ENCODE measurements at regions of chr19 and their contacts with region 1.

Region 1: DNA sequence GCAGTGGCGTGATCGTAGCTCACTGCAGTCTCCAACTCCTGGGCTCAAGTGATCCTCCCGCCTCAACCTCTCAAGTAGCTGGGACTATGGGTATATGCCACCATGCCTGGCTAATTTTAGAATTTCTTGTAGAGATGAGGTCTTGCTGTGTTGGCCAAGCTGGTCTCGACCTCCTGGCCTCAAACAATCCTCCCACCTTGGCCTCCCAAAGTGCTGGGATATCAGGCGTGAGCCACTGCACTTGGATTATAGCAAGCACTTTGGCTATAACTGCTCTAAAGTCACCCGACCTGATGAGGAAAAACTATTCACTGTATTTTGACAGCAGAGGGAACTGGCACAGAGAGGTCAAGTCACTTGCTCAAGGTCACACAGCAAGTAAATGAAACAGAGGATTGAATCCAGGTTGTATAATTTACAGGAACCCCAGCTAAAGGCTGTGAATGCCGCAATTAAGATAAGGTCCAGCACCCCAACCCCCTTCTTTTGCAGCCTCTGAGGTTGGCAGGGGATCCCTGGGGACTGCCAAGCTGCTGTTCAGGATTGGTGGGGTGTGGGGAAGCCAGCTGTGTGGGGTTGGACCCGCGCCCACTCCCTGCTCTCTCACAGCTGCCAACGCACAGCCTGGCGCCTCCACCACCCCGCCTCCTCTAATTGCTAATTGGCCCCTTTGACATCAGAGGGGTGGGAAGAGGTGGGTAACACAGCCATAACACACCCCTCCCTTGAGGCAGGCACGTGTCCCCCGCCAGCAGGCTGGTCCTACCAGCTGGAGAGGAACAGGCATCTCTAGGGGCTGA is 6.0 kb downstream of the TMIGD2 start:
- DNase-seq: no peak
- H3K4me3 ChIP-seq: no peak overlapping the region
- H3K27ac ChIP-seq: no peak overlapping the region
- H3K4me1 ChIP-seq: no peaks in the 10 kb centered on the region
- H3K27me3 ChIP-seq: no peaks in the 10 kb centered on the region
- CTCF ChIP-seq: no peak

Region 2: GRCh38 chr19:4032436-4032835 is 263.7 kb before region 1 on chr19:
- CTCF ChIA-PET with region 1: no interaction called
- POLR2A ChIA-PET with region 1: no interaction called
- intact Hi-C with region 1: no loop called
- DNase-seq: no peak
- H3K4me3 ChIP-seq: no peak overlapping the region
- H3K27ac ChIP-seq: no peak overlapping the region
- H3K4me1 ChIP-seq: no peaks in the 10 kb centered on the region
- H3K27me3 ChIP-seq: no peaks in the 10 kb centered on the region
- CTCF ChIP-seq: no peak

Region 3: DNA sequence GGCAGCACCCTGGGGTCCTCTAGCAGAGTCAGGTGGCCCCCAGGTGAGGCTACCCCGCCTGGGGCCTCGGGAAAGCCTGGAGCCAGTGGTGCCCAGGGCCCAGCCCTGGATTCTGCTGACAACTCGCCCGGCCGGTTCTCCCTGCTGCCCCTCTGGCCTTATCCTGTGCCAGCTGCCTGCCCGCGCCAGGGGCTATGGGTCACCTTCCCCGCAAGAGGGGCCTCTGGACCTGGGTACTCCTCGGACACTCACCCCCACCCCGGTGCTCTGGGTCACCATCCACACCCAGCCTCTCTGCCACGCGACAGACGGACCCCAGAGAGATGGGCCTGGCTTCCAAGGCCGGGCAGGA is 253.5 kb before region 1 on chr19:
- CTCF ChIA-PET with region 1: no interaction called
- POLR2A ChIA-PET with region 1: interaction called, 26 read pairs
- intact Hi-C with region 1: no loop called
- DNase-seq: peak; percentile 51 to 76
- H3K4me3 ChIP-seq: no peak overlapping the region
- H3K27ac ChIP-seq: 0 out of 2 replicates have a peak overlapping the region, but pooled peaks have one; percentile 41
- H3K4me1 ChIP-seq: peaks cover 19% of the 10 kb centered on the region
- H3K27me3 ChIP-seq: no peaks in the 10 kb centered on the region
- CTCF ChIP-seq: no peak

Region 4: GRCh38 chr19:4229179-4229931 is 66.8 kb before region 1 on chr19 and contains the start of gene EBI3:
- CTCF ChIA-PET with region 1: no interaction called
- POLR2A ChIA-PET with region 1: no interaction called
- intact Hi-C with region 1: no loop called
- DNase-seq: peak in 1 of 2 experiments; percentile 43
- H3K4me3 ChIP-seq: no peak within 1 kb of the TSS
- H3K27ac ChIP-seq: no peak within 1 kb of the TSS
- H3K4me1 ChIP-seq: no peaks in the 10 kb centered on the region
- H3K27me3 ChIP-seq: no peaks in the 10 kb centered on the region
- CTCF ChIP-seq: no peak
- total RNA-seq, gene EBI3: not detected in 2 replicates

Measured in PC-9 (cell line).